CD8-positive, alpha-beta T cell (primary cell): ENCODE measurements at regions of chr22 and their contacts with region 1.

Region 1: GRCh38 chr22:38513063-38513462 is 7.0 kb upstream of the DDX17 start:
- DNase-seq: peak; percentile 11 to 72 (median 51)
- ATAC-seq: peak; percentile 94
- H3K4me3 ChIP-seq: no peak overlapping the region
- H3K4me3 Mint-ChIP-seq: no peak overlapping the region
- H3K27ac ChIP-seq: no peak overlapping the region
- H3K27ac Mint-ChIP-seq: no peak overlapping the region
- H3K4me1 ChIP-seq: no peaks in the 10 kb centered on the region
- H3K4me1 Mint-ChIP-seq: peaks cover 8% of the 10 kb centered on the region
- H3K27me3 ChIP-seq: no peaks in the 10 kb centered on the region
- H3K27me3 Mint-ChIP-seq: no peaks in the 10 kb centered on the region
- CTCF ChIP-seq: no peak

Region 2: GRCh38 chr22:38412435-38413084 is 100.5 kb before region 1 on chr22:
- CTCF ChIA-PET with region 1: no interaction called
- POLR2A ChIA-PET with region 1: no interaction called
- intact Hi-C with region 1: loop called in 1 of 2 experiments (anchors 5 kb)
- DNase-seq: peak in 7 of 9 experiments; percentile 19 to 55 (median 48)
- ATAC-seq: peak; percentile 79
- H3K4me3 ChIP-seq: no peak overlapping the region
- H3K4me3 Mint-ChIP-seq: no peak overlapping the region
- H3K27ac ChIP-seq: no peak overlapping the region
- H3K27ac Mint-ChIP-seq: no peak overlapping the region
- H3K4me1 ChIP-seq: peaks cover 8% of the 10 kb centered on the region
- H3K4me1 Mint-ChIP-seq: no peaks in the 10 kb centered on the region
- H3K27me3 ChIP-seq: no peaks in the 10 kb centered on the region
- H3K27me3 Mint-ChIP-seq: peaks cover 5% of the 10 kb centered on the region
- CTCF ChIP-seq: peak; percentile 89

Region 3: GRCh38 chr22:38531251-38531938 is 18.3 kb after region 1 on chr22:
- CTCF ChIA-PET with region 1: no interaction called
- POLR2A ChIA-PET with region 1: no interaction called
- intact Hi-C with region 1: loop called in 1 of 2 experiments (anchors 1 kb)
- DNase-seq: no peak
- ATAC-seq: peak; percentile 56
- H3K4me3 ChIP-seq: no peak overlapping the region
- H3K4me3 Mint-ChIP-seq: peak overlapping the region; percentile 23
- H3K27ac ChIP-seq: peak overlapping the region; percentile 7 to 44
- H3K27ac Mint-ChIP-seq: peak overlapping the region; percentile 83
- H3K4me1 ChIP-seq: peaks cover 19% of the 10 kb centered on the region
- H3K4me1 Mint-ChIP-seq: peaks cover 14% of the 10 kb centered on the region
- H3K27me3 ChIP-seq: no peaks in the 10 kb centered on the region
- H3K27me3 Mint-ChIP-seq: no peaks in the 10 kb centered on the region
- CTCF ChIP-seq: no peak